IMR-90 (cell line): ENCODE measurements at regions of chr1 and their contacts with region 1.

Region 1: DNA sequence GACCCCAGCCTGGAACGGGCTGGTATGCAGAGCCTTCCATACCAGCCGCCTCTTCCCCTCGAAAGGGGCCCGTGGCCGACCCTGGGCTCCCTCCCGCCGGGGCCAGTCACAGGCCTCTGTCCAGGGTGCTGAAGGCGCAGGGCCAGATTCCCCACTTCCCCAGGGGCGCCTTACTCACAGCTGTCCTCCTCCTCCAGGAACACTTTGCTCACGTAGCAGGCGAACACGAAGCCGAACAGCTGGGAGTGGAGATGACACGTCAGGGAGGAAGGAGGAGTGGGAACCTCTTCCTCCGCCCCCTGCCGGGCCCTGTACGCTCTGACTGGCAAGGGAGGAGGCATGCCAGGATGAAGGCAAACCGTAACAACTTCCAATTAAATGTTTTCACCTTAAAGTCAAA is 57.3 kb downstream of the NKAIN1 start:
- DNase-seq: peak; percentile 97
- ATAC-seq: peak; percentile 95
- H3K4me3 ChIP-seq: no peak overlapping the region
- H3K27ac ChIP-seq: no peak overlapping the region
- H3K4me1 ChIP-seq: no peaks in the 10 kb centered on the region
- H3K27me3 ChIP-seq: peaks cover 20% of the 10 kb centered on the region
- CTCF ChIP-seq: peak; percentile 50
- POLR2A ChIP-seq: no peak
- RAD21 ChIP-seq: peak; percentile 32; the same call in 1 of the 2 replicates

Region 2: GRCh38 chr1:30929135-30929889 is 253.0 kb before region 1 on chr1:
- CTCF ChIA-PET with region 1: no interaction called
- POLR2A ChIA-PET with region 1: no interaction called
- dilution Hi-C with region 1: no loop called
- in situ Hi-C with region 1: no loop called
- intact Hi-C with region 1: loop called (anchors 1 kb)
- DNase-seq: peak; percentile 36
- ATAC-seq: peak; percentile 80
- H3K4me3 ChIP-seq: no peak overlapping the region
- H3K27ac ChIP-seq: no peak overlapping the region
- H3K4me1 ChIP-seq: peaks cover 7% of the 10 kb centered on the region
- H3K27me3 ChIP-seq: no peaks in the 10 kb centered on the region
- CTCF ChIP-seq: peak; percentile 65
- POLR2A ChIP-seq: no peak
- RAD21 ChIP-seq: peak; percentile 66

Region 3: DNA sequence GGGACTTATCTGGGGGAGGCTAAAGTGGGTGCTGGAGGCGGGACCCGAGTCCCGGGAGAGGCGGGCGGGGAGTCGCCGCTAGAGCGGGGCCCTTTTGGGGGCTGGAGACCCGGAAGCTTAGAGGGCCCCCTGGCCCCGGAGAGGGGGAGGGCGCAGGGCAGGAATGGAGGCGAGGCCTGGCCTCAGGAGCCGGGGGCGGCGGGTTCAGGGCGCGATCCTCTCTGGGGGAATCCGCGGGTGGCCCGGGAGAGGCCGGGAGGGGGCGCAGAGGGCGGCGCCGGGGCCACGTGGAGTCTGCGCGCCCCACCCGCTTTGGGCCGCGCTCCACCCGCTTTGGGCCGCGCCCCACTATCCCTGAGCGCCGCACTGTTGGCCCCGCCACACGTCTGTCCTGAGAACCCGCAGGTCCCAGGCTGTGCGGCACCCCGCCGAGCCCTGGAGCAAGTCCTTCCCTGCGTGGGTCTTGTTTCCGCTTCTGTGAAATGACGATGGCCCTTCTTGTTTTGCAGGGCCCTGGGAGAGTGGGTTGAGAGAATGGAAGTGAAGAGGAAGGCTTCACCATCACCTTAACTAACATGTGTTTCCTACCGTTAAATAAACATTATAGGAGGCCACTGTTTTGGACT is 27.0 kb before region 1 on chr1:
- CTCF ChIA-PET with region 1: no interaction called
- POLR2A ChIA-PET with region 1: no interaction called
- dilution Hi-C with region 1: no loop called
- in situ Hi-C with region 1: no loop called
- intact Hi-C with region 1: loop called (anchors 2 kb)
- DNase-seq: peak; percentile 32
- ATAC-seq: peak; percentile 80
- H3K4me3 ChIP-seq: peak overlapping the region; percentile 71
- H3K27ac ChIP-seq: peak overlapping the region; percentile 71
- H3K4me1 ChIP-seq: peaks cover 6% of the 10 kb centered on the region
- H3K27me3 ChIP-seq: no peaks in the 10 kb centered on the region
- CTCF ChIP-seq: peak; percentile 28; the same call in 1 of the 2 replicates
- POLR2A ChIP-seq: peak; percentile 36; the same call in 1 of the 2 replicates
- RAD21 ChIP-seq: no peak

Region 4: GRCh38 chr1:31239653-31240241 is 57.4 kb after region 1 on chr1 and contains the start of gene NKAIN1:
- CTCF ChIA-PET with region 1: no interaction called
- POLR2A ChIA-PET with region 1: no interaction called
- dilution Hi-C with region 1: no loop called
- in situ Hi-C with region 1: no loop called
- intact Hi-C with region 1: no loop called
- DNase-seq: peak; percentile 18
- ATAC-seq: peak; percentile 89
- H3K4me3 ChIP-seq: peak within 1 kb of the TSS; percentile 4; the same call in 1 of the 2 replicates
- H3K27ac ChIP-seq: no peak within 1 kb of the TSS
- H3K4me1 ChIP-seq: no peaks in the 10 kb centered on the region
- H3K27me3 ChIP-seq: peaks cover 57% of the 10 kb centered on the region
- CTCF ChIP-seq: no peak
- POLR2A ChIP-seq: no peak
- RAD21 ChIP-seq: no peak
- total RNA-seq, gene NKAIN1: under 0.01 TPM in 2 replicates

Region 5: GRCh38 chr1:31296486-31297276 is 114.3 kb after region 1 on chr1 and contains the starts of genes SNRNP40 and ZCCHC17:
- CTCF ChIA-PET with region 1: no interaction called
- POLR2A ChIA-PET with region 1: no interaction called
- dilution Hi-C with region 1: no loop called
- in situ Hi-C with region 1: no loop called
- intact Hi-C with region 1: loop called (anchors 10 kb)
- DNase-seq: peak; percentile 99
- ATAC-seq: peak; percentile 96
- H3K4me3 ChIP-seq: peak within 1 kb of the TSS; percentile 73
- H3K27ac ChIP-seq: peak within 1 kb of the TSS; percentile 77
- H3K4me1 ChIP-seq: peaks cover 2% of the 10 kb centered on the region
- H3K27me3 ChIP-seq: no peaks in the 10 kb centered on the region
- CTCF ChIP-seq: no peak
- POLR2A ChIP-seq: peak; percentile 96
- RAD21 ChIP-seq: no peak
- total RNA-seq, gene SNRNP40: 148 and 178 TPM in 2 replicates
- total RNA-seq, gene ZCCHC17: 48.4 and 63.0 TPM in 2 replicates

Region 6: DNA sequence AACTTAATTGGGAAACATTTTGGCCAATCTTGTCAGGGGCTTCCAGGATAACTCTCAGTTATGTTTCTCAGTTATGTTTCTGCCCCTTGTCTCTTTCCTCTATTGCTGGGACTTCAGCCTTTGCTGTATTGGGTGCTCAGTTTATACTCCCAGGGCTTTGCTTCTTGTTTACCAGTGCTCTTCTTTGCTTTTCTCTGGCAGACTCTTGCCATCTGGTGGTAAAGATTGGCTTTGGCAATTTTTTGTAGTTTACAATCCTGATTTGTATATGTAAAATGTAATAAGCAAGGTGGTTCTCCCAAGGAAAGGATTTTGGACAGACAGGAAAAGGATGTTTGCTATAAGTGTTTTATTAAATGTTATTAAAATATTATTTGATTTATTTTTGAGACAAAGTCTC is 152.7 kb after region 1 on chr1:
- CTCF ChIA-PET with region 1: no interaction called
- POLR2A ChIA-PET with region 1: no interaction called
- dilution Hi-C with region 1: no loop called
- in situ Hi-C with region 1: no loop called
- intact Hi-C with region 1: loop called (anchors 1 kb)
- DNase-seq: peak; percentile 46
- ATAC-seq: peak; percentile 81
- H3K4me3 ChIP-seq: no peak overlapping the region
- H3K27ac ChIP-seq: no peak overlapping the region
- H3K4me1 ChIP-seq: no peaks in the 10 kb centered on the region
- H3K27me3 ChIP-seq: no peaks in the 10 kb centered on the region
- CTCF ChIP-seq: peak; percentile 51
- POLR2A ChIP-seq: no peak
- RAD21 ChIP-seq: peak; percentile 65

Region 7: GRCh38 chr1:31376375-31377134 is 194.2 kb after region 1 on chr1:
- CTCF ChIA-PET with region 1: no interaction called
- POLR2A ChIA-PET with region 1: no interaction called
- dilution Hi-C with region 1: no loop called
- in situ Hi-C with region 1: no loop called
- intact Hi-C with region 1: no loop called
- DNase-seq: peak; percentile 98
- ATAC-seq: peak; percentile 85
- H3K4me3 ChIP-seq: no peak overlapping the region
- H3K27ac ChIP-seq: no peak overlapping the region
- H3K4me1 ChIP-seq: peaks cover 7% of the 10 kb centered on the region
- H3K27me3 ChIP-seq: no peaks in the 10 kb centered on the region
- CTCF ChIP-seq: no peak
- POLR2A ChIP-seq: no peak
- RAD21 ChIP-seq: no peak

Region 8: DNA sequence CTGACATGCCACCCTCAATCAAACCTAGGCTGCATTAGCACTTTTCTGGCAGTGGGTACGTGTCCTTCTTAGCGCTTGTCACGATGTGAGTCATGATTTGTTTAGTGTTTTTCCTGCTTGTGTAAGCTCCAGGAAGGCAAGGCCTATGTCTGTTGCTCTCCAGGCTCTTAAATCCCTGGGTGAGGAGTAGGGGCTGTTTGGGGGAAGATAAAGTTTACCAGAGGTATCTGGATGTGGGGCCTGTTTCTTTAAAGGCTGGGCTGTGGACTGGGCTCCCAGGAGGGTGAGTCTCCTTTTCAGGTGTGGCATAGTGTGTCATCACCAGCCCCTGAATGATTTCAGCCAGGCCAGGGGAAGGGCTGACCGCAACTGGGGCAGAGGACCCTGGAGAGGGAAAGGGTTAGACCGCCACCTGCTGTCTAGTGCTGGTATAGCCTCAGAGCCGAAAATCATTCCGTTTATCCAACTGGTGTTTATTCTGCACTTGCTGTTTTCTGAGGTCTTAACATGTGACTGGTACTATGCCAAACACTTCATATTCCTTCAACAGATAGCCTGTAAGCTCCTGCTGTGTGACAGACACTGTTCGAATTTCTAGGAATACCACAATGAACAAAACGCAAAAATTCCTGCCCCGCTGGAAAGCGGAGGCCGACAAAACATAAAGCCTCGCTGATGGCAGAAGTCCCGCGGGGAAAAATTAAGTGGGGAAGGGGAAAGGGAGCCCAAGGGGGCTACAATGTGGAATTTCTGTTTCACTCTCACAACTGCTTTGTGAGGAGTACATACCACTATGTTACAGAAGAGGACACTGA is 240.4 kb after region 1 on chr1:
- CTCF ChIA-PET with region 1: interaction called, 3 read pairs
- POLR2A ChIA-PET with region 1: no interaction called
- dilution Hi-C with region 1: no loop called
- in situ Hi-C with region 1: loop called (anchors 10 kb)
- intact Hi-C with region 1: loop called (anchors 1 kb)
- DNase-seq: peak; percentile 90
- ATAC-seq: peak; percentile 94
- H3K4me3 ChIP-seq: no peak overlapping the region
- H3K27ac ChIP-seq: peak overlapping the region; percentile 24; the same call in 1 of the 2 replicates
- H3K4me1 ChIP-seq: peaks cover 10% of the 10 kb centered on the region
- H3K27me3 ChIP-seq: no peaks in the 10 kb centered on the region
- CTCF ChIP-seq: peak; percentile 94
- POLR2A ChIP-seq: no peak
- RAD21 ChIP-seq: peak; percentile 97

Region 9: GRCh38 chr1:31548907-31549808 is 366.8 kb after region 1 on chr1:
- CTCF ChIA-PET with region 1: interaction called, 5 read pairs
- POLR2A ChIA-PET with region 1: no interaction called
- dilution Hi-C with region 1: no loop called
- in situ Hi-C with region 1: loop called (anchors 10 kb)
- intact Hi-C with region 1: loop called (anchors 1 kb)
- DNase-seq: peak; percentile 82
- ATAC-seq: peak; percentile 99
- H3K4me3 ChIP-seq: no peak overlapping the region
- H3K27ac ChIP-seq: no peak overlapping the region
- H3K4me1 ChIP-seq: peaks cover 5% of the 10 kb centered on the region
- H3K27me3 ChIP-seq: peaks cover 13% of the 10 kb centered on the region
- CTCF ChIP-seq: peak; percentile 95
- POLR2A ChIP-seq: no peak
- RAD21 ChIP-seq: peak; percentile 95